ENCODE measurements at regions of chr11 and their contacts with region 1.

Region 1: GRCh38 chr11:103959279-103959942 is 77.0 kb upstream of the DDI1 start:
- DNase-seq: no peak
- ATAC-seq: no peak
- H3K4me3 ChIP-seq: no peak overlapping the region
- H3K27ac ChIP-seq: no peak overlapping the region
- H3K4me1 ChIP-seq: no peaks in the 10 kb centered on the region
- H3K27me3 ChIP-seq: no peaks in the 10 kb centered on the region
- CTCF ChIP-seq: no peak
- POLR2A ChIP-seq: no peak
- RAD21 ChIP-seq: no peak

Region 2: GRCh38 chr11:103947546-103947919 is 11.9 kb before region 1 on chr11:
- CTCF ChIA-PET with region 1: interaction called, 4 read pairs
- POLR2A ChIA-PET with region 1: no interaction called
- RAD21 ChIA-PET with region 1: no interaction called
- intact Hi-C with region 1: loop called (anchors 1 kb)
- DNase-seq: no peak
- ATAC-seq: no peak
- H3K4me3 ChIP-seq: no peak overlapping the region
- H3K27ac ChIP-seq: no peak overlapping the region
- H3K4me1 ChIP-seq: no peaks in the 10 kb centered on the region
- H3K27me3 ChIP-seq: no peaks in the 10 kb centered on the region
- CTCF ChIP-seq: no peak
- POLR2A ChIP-seq: no peak
- RAD21 ChIP-seq: no peak

Region 3: DNA sequence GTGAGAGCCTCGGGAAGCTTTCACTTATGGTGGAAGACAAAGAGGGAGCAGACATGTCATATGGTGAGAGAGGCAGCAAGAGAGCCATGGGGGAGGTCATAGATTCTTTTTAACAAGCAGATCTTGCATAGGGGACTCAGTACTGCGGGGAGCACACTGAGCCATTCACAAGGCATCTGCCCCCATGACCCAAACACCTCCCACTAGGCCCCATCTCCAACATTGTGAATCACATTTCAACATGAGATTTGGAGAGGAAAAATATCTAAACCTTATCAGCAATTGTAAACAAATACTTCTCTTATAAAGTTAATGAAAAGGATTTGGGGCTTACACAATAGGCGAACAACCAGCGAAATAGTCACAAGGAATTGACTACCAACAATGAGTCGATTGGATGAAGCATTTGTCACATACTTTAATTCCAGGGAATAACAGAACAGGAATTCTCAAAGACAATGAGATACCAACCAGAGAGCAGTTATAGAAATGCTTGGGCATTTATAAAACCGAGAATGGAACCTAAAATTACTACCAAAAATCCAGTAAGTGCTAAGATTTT is 84.3 kb after region 1 on chr11:
- CTCF ChIA-PET with region 1: no interaction called
- POLR2A ChIA-PET with region 1: no interaction called
- RAD21 ChIA-PET with region 1: no interaction called
- intact Hi-C with region 1: no loop called
- DNase-seq: no peak
- ATAC-seq: no peak
- H3K4me3 ChIP-seq: no peak overlapping the region
- H3K27ac ChIP-seq: no peak overlapping the region
- H3K4me1 ChIP-seq: no peaks in the 10 kb centered on the region
- H3K27me3 ChIP-seq: no peaks in the 10 kb centered on the region
- CTCF ChIP-seq: no peak
- POLR2A ChIP-seq: no peak
- RAD21 ChIP-seq: no peak

Measured in HCT116 (cell line).